ENCODE measurements at regions of chr13 and their contacts with region 1.

Region 1: GRCh38 chr13:76903544-76904162 is 17.4 kb upstream of the KCTD12 start:
- DNase-seq: peak; percentile 25
- ATAC-seq: peak; percentile 91
- H3K4me3 ChIP-seq: no peak overlapping the region
- H3K27ac ChIP-seq: no peak overlapping the region
- H3K4me1 ChIP-seq: no peaks in the 10 kb centered on the region
- H3K27me3 ChIP-seq: no peaks in the 10 kb centered on the region; a peak in 1 of 4 replicates
- CTCF ChIP-seq: peak; percentile 95 to 100 (median 98)
- EP300 ChIP-seq: no peak
- POLR2A ChIP-seq: no peak
- RAD21 ChIP-seq: peak; percentile 99

Region 2: GRCh38 chr13:75687150-75687763 is 1216.4 kb before region 1 on chr13:
- CTCF ChIA-PET with region 1: interaction called, 5 read pairs
- POLR2A ChIA-PET with region 1: no interaction called
- RAD21 ChIA-PET with region 1: interaction called, 3 read pairs
- SMC1A ChIA-PET with region 1: interaction called, 5 read pairs
- in situ Hi-C with region 1: loop called (anchors 10 kb)
- intact Hi-C with region 1: no loop called
- DNase-seq: no peak
- ATAC-seq: peak; percentile 60
- H3K4me3 ChIP-seq: no peak overlapping the region
- H3K27ac ChIP-seq: no peak overlapping the region
- H3K4me1 ChIP-seq: no peaks in the 10 kb centered on the region
- H3K27me3 ChIP-seq: no peaks in the 10 kb centered on the region
- CTCF ChIP-seq: peak; percentile 23 to 39 (median 38); a peak in 5 of 6 replicates
- EP300 ChIP-seq: no peak
- POLR2A ChIP-seq: no peak
- RAD21 ChIP-seq: peak; percentile 47

Region 3: GRCh38 chr13:75876360-75877050 is 1027.1 kb before region 1 on chr13:
- CTCF ChIA-PET with region 1: interaction called, 33 read pairs
- POLR2A ChIA-PET with region 1: no interaction called
- RAD21 ChIA-PET with region 1: interaction called, 24 read pairs
- SMC1A ChIA-PET with region 1: interaction called, 28 read pairs
- in situ Hi-C with region 1: loop called (anchors 5 kb)
- intact Hi-C with region 1: loop called (anchors 1 kb)
- DNase-seq: peak; percentile 23
- ATAC-seq: peak; percentile 97
- H3K4me3 ChIP-seq: no peak overlapping the region
- H3K27ac ChIP-seq: no peak overlapping the region
- H3K4me1 ChIP-seq: no peaks in the 10 kb centered on the region
- H3K27me3 ChIP-seq: no peaks in the 10 kb centered on the region
- CTCF ChIP-seq: peak; percentile 94 to 95 (median 94)
- EP300 ChIP-seq: no peak
- POLR2A ChIP-seq: no peak
- RAD21 ChIP-seq: peak; percentile 99

Region 4: GRCh38 chr13:76473552-76474134 is 430.0 kb before region 1 on chr13:
- CTCF ChIA-PET with region 1: interaction called, 5 read pairs
- POLR2A ChIA-PET with region 1: no interaction called
- RAD21 ChIA-PET with region 1: interaction called, 3 read pairs
- SMC1A ChIA-PET with region 1: interaction called, 4 read pairs
- in situ Hi-C with region 1: loop called (anchors 10 kb)
- intact Hi-C with region 1: loop called (anchors 2 kb)
- DNase-seq: peak; percentile 25
- ATAC-seq: peak; percentile 100
- H3K4me3 ChIP-seq: no peak overlapping the region
- H3K27ac ChIP-seq: no peak overlapping the region
- H3K4me1 ChIP-seq: no peaks in the 10 kb centered on the region
- H3K27me3 ChIP-seq: no peaks in the 10 kb centered on the region
- CTCF ChIP-seq: peak; percentile 68 to 85 (median 84)
- EP300 ChIP-seq: no peak
- POLR2A ChIP-seq: no peak
- RAD21 ChIP-seq: peak; percentile 96

Region 5: DNA sequence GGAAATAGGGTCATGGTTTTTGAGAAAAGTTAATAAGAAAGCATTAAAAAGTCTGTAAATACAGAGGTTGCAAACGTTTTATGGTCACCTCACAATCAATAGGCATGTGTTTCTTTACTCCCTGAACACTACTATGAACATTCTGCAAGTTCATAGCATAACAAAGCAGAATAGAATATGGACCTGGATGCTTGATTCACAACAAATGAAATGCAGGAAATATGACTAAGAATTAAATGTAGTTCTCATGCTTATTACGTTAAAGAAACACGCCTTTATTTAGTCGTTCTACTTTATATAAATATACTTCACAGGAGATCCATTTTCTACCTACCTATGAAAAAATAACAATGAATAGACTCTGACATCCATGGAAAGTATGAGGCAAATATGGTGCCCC is 361.5 kb before region 1 on chr13:
- CTCF ChIA-PET with region 1: no interaction called
- POLR2A ChIA-PET with region 1: no interaction called
- RAD21 ChIA-PET with region 1: no interaction called
- SMC1A ChIA-PET with region 1: no interaction called
- in situ Hi-C with region 1: no loop called
- intact Hi-C with region 1: no loop called
- DNase-seq: no peak
- ATAC-seq: no peak
- H3K4me3 ChIP-seq: no peak overlapping the region
- H3K27ac ChIP-seq: no peak overlapping the region
- H3K4me1 ChIP-seq: no peaks in the 10 kb centered on the region
- H3K27me3 ChIP-seq: no peaks in the 10 kb centered on the region
- CTCF ChIP-seq: no peak
- EP300 ChIP-seq: no peak
- POLR2A ChIP-seq: no peak
- RAD21 ChIP-seq: no peak

Region 6: GRCh38 chr13:76822698-76823267 is 80.9 kb before region 1 on chr13:
- CTCF ChIA-PET with region 1: interaction called, 14 read pairs
- POLR2A ChIA-PET with region 1: no interaction called
- RAD21 ChIA-PET with region 1: interaction called, 6 read pairs
- SMC1A ChIA-PET with region 1: interaction called, 4 read pairs
- in situ Hi-C with region 1: no loop called
- intact Hi-C with region 1: no loop called
- DNase-seq: no peak
- ATAC-seq: peak; percentile 34; the same call in 1 of the 3 replicates
- H3K4me3 ChIP-seq: no peak overlapping the region
- H3K27ac ChIP-seq: no peak overlapping the region
- H3K4me1 ChIP-seq: no peaks in the 10 kb centered on the region
- H3K27me3 ChIP-seq: no peaks in the 10 kb centered on the region
- CTCF ChIP-seq: peak in 2 of 3 experiments; percentile 18 to 24; a peak in 2 of 6 replicates
- EP300 ChIP-seq: no peak
- POLR2A ChIP-seq: no peak
- RAD21 ChIP-seq: no peak; the same call in 1 of the 2 replicates

Region 7: GRCh38 chr13:76864259-76864658 is 39.4 kb before region 1 on chr13:
- CTCF ChIA-PET with region 1: no interaction called
- POLR2A ChIA-PET with region 1: no interaction called
- RAD21 ChIA-PET with region 1: no interaction called
- SMC1A ChIA-PET with region 1: no interaction called
- in situ Hi-C with region 1: no loop called
- intact Hi-C with region 1: no loop called
- DNase-seq: no peak
- ATAC-seq: no peak
- H3K4me3 ChIP-seq: no peak overlapping the region
- H3K27ac ChIP-seq: no peak overlapping the region
- H3K4me1 ChIP-seq: no peaks in the 10 kb centered on the region
- H3K27me3 ChIP-seq: no peaks in the 10 kb centered on the region; a peak in 1 of 4 replicates
- CTCF ChIP-seq: no peak
- EP300 ChIP-seq: no peak
- POLR2A ChIP-seq: no peak
- RAD21 ChIP-seq: no peak

Region 8: DNA sequence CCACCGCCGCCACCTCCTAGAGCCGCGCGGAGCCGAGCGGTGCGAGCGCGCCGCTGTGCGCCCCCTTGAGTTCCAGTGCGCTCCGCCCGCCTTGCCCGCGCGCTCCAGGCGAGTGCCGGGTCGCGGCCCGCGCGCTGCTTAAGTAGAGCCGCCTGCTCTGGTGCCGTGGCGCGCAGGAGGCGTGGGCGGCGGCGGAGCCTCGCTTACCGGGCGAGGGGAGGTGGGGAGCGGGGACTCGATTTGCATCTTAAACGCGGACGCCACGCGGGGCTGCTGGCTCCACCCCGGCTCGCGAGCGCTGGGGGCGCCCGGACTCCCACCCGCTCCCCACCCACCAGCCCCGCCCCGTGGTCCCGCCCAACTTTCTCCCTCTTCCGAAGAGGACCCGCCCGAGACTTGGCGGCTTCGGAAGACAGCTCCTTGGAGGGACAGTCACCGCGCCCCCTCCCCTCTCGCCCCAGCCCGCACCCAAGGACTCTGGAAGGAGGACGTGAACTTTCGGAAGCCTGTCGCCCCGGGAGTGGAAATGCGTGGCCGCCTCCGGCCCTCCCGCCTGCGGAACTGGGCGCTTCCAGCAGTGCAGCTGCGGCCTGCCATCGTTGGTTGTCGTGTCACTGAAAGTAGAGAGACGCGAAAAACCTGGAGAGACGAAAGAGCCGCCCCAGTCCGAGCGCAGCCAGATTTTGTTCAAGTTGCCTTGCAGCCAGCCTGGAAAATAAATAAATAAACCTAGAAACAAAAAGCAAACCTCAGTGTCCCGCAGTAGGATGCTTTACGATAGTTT is 17.2 kb before region 1 on chr13 and contains the start of gene KCTD12:
- CTCF ChIA-PET with region 1: interaction called, 5 read pairs
- POLR2A ChIA-PET with region 1: no interaction called
- RAD21 ChIA-PET with region 1: interaction called, 11 read pairs
- SMC1A ChIA-PET with region 1: interaction called, 5 read pairs
- in situ Hi-C with region 1: no loop called
- intact Hi-C with region 1: no loop called
- DNase-seq: no peak
- ATAC-seq: peak; percentile 90
- H3K4me3 ChIP-seq: peak within 1 kb of the TSS; percentile 72
- H3K27ac ChIP-seq: no peak within 1 kb of the TSS
- H3K4me1 ChIP-seq: no peaks in the 10 kb centered on the region
- H3K27me3 ChIP-seq: peaks cover 0 to 4% of the 10 kb centered on the region in 2 experiments; a peak in 2 of 4 replicates
- CTCF ChIP-seq: peak; percentile 8 to 20 (median 15); a peak in 3 of 6 replicates
- EP300 ChIP-seq: no peak
- POLR2A ChIP-seq: peak; percentile 81
- RAD21 ChIP-seq: no peak
- polyA plus RNA-seq, gene KCTD12: 0.39 to 0.79 TPM

Region 9: DNA sequence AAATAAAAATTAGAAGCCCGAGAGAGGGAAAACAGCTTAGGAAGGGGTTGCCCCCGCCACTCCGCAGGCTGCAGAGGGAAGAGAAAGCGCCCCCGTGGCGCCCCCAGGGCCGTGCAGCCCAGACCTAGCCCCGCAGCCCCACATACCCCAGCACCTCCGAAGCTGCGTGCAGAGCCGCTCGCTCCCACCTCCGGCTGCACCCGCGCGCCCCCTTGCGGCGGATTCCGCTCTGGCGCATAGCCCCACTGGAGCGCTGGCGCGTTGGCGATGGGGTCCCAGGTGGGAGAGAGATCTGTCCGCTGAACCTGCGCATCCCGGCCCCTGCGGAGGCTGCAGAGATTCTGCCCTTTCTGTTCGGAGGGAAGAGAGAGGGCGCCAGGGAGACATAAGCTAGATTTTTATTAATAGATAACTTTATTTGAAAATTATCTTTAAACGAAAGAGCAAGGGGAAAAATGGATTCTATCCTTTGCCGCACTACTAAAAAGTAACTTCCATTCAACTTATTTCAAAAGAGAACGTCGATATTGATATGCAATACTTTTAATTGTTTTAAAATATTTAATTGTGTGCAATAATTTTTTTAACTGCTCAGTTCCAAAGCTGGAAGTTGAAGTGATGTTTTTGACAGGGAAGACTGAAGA is 76.5 kb after region 1 on chr13:
- CTCF ChIA-PET with region 1: interaction called, 54 read pairs
- POLR2A ChIA-PET with region 1: no interaction called
- RAD21 ChIA-PET with region 1: interaction called, 13 read pairs
- SMC1A ChIA-PET with region 1: interaction called, 9 read pairs
- in situ Hi-C with region 1: no loop called
- intact Hi-C with region 1: no loop called
- DNase-seq: no peak
- ATAC-seq: peak; percentile 100
- H3K4me3 ChIP-seq: no peak overlapping the region
- H3K27ac ChIP-seq: no peak overlapping the region
- H3K4me1 ChIP-seq: no peaks in the 10 kb centered on the region
- H3K27me3 ChIP-seq: peaks cover 0 to 2% of the 10 kb centered on the region in 2 experiments; a peak in 2 of 4 replicates
- CTCF ChIP-seq: peak; percentile 89 to 99 (median 94)
- EP300 ChIP-seq: no peak
- POLR2A ChIP-seq: no peak
- RAD21 ChIP-seq: peak; percentile 78